ENCODE measurements at regions of chr14 and their contacts with region 1.

Region 1: DNA sequence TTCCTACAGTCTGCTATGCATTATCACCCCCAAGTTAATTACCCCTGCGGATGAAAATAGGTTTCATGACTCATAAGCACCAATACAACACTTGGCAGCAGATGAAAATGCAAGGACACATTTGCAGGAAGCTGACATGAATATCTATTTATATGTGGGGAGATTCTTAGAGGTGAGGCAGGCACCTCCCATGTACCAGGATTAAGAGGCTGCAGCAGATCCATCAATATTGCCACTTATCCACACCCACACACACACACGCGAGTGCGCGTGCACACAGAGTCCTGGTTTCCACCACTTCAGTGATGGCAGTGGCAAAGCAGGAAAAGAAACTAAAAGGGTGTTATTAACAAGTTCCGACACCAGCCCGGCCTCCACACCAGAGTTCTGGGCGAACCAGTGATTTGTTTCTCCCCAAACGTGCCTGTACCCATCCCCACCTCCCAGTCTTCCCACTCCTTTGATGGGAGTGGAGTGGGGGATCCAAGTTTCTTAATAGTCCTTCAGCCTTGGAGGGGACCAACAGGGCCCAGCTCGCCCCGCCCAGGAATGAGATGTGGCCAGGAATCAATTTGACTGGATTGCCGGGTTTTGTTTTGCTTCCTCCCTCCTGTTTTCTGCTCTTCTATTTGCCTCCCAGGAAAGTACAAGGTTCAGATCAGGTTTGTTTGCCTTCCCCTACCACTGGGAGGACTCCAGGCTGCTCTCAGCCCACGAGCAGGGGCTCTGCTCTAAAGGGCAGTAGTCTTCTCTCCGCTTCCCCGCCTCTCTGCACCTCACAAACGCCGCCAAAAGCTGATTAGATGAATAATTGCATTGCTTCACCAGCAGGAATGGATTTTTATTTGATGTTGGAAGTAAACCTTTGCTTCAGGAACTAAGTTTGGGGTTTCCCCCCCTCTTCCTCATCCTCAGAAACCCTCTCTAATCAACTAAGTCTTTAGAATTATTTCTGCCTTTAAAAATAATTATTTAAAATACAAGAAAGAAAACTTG is 5.2 kb downstream of the IRF2BPL start:
- DNase-seq: peak in 2 of 3 donors; percentile 62 to 68
- ATAC-seq: peak; percentile 3 to 10
- H3K4me3 ChIP-seq: peak overlapping the region; percentile 95
- H3K27ac ChIP-seq: peak overlapping the region; percentile 94
- H3K4me1 ChIP-seq: peaks cover 9% of the 10 kb centered on the region
- H3K27me3 ChIP-seq: no peaks in the 10 kb centered on the region

Region 2: GRCh38 chr14:77044783-77045237 is 21.5 kb after region 1 on chr14:
- intact Hi-C with region 1: loop called in 1 of 4 experiments (anchors 2 kb)
- DNase-seq: peak in 2 of 3 donors; percentile 67 to 82
- ATAC-seq: peak; percentile 4 to 12
- H3K4me3 ChIP-seq: no peak overlapping the region
- H3K27ac ChIP-seq: peak overlapping the region; percentile 94
- H3K4me1 ChIP-seq: peaks cover 36% of the 10 kb centered on the region
- H3K27me3 ChIP-seq: no peaks in the 10 kb centered on the region

Measured in right cardiac atrium (tissue), 5 donors.